ENCODE measurements at regions of chr10 and their contacts with region 1.

Region 1: GRCh38 chr10:100998991-100999741 is 442 bp upstream of the LZTS2 start:
- DNase-seq: peak; percentile 73 to 86 (median 79)
- H3K4me3 ChIP-seq: peak overlapping the region; percentile 64 to 73
- H3K4me3 Mint-ChIP-seq: peak overlapping the region; percentile 84 to 98 (median 91)
- H3K27ac ChIP-seq: peak overlapping the region; percentile 83
- H3K27ac Mint-ChIP-seq: peak overlapping the region; percentile 82 to 96 (median 94)
- H3K4me1 ChIP-seq: peaks cover 24% of the 10 kb centered on the region
- H3K4me1 Mint-ChIP-seq: peaks cover 15 to 34% (median 24%) of the 10 kb centered on the region in 4 donors
- H3K27me3 ChIP-seq: no peaks in the 10 kb centered on the region
- H3K27me3 Mint-ChIP-seq: no peaks in the 10 kb centered on the region

Region 2: GRCh38 chr10:100562008-100562711 is 437.0 kb before region 1 on chr10:
- CTCF ChIA-PET with region 1: no interaction called
- POLR2A ChIA-PET with region 1: interaction called, 3 read pairs
- intact Hi-C with region 1: loop called (anchors 5 kb)
- DNase-seq: peak; percentile 77 to 79 (median 79)
- H3K4me3 ChIP-seq: no peak overlapping the region
- H3K4me3 Mint-ChIP-seq: peak overlapping the region; percentile 7 to 71 (median 58)
- H3K27ac ChIP-seq: no peak overlapping the region
- H3K27ac Mint-ChIP-seq: no peak overlapping the region
- H3K4me1 ChIP-seq: peaks cover 17% of the 10 kb centered on the region
- H3K4me1 Mint-ChIP-seq: peaks cover 14 to 22% (median 16%) of the 10 kb centered on the region in 4 donors
- H3K27me3 ChIP-seq: no peaks in the 10 kb centered on the region
- H3K27me3 Mint-ChIP-seq: peaks cover 26 to 43% of the 10 kb centered on the region in 2 donors

Region 3: DNA sequence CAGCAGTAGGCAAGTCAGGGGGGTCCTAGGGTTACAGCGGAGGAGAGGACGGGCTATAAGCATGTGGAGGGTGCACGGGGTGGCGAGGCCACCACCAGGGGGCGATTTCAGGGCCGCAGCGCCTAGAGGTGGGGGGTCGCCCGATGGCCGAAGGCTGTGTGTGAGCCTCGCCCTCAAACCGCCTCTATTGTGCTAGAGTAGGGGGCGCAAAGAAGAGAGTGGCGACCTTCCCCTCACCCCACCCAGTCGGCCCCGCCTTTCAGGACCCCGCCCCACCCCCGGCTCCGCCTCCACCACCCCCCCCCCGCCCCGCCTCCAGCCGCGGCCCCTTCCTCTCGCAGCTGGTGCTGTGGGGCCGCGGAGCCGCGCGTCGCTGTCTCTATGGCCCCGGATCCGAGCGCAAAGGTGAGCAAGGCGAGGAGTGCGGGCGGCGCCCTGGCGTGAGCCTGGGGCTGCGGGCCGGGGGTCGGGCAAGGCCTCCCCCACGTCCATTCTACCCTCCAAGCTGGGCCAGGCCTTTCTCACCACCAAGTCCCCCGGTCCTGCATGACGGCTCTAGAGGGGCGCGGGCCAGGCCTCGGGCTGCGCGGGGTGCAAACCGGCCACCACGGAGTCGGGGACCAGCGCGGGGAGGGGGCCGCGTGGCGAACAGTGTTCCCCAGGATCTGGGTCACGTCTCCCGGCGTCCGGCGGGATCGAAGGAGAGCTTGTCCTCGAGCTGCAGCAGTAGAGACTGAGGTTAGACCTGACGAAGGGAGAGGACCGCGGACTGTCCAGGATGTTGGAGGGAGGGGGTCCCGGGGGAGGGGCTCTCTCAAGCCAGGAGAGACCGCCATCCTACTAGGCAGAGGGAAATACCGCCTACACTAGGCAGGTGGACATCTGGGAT is 29.7 kb before region 1 on chr10 and contains the start of gene SEMA4G:
- CTCF ChIA-PET with region 1: interaction called, 15 read pairs
- POLR2A ChIA-PET with region 1: interaction called, 8 read pairs
- intact Hi-C with region 1: loop called (anchors 2 kb)
- DNase-seq: peak; percentile 24 to 49 (median 32)
- H3K4me3 ChIP-seq: peak within 1 kb of the TSS in 1 of 2 donors; percentile 58
- H3K4me3 Mint-ChIP-seq: peak within 1 kb of the TSS; percentile 66 to 81 (median 76)
- H3K27ac ChIP-seq: no peak within 1 kb of the TSS
- H3K27ac Mint-ChIP-seq: peak within 1 kb of the TSS in 4 of 7 donors; percentile 43 to 70 (median 59)
- H3K4me1 ChIP-seq: peaks cover 18% of the 10 kb centered on the region
- H3K4me1 Mint-ChIP-seq: peaks cover 4 to 23% (median 14%) of the 10 kb centered on the region in 4 donors
- H3K27me3 ChIP-seq: no peaks in the 10 kb centered on the region
- H3K27me3 Mint-ChIP-seq: no peaks in the 10 kb centered on the region
- total RNA-seq, gene SEMA4G: 1.1 to 1.4 TPM

Region 4: DNA sequence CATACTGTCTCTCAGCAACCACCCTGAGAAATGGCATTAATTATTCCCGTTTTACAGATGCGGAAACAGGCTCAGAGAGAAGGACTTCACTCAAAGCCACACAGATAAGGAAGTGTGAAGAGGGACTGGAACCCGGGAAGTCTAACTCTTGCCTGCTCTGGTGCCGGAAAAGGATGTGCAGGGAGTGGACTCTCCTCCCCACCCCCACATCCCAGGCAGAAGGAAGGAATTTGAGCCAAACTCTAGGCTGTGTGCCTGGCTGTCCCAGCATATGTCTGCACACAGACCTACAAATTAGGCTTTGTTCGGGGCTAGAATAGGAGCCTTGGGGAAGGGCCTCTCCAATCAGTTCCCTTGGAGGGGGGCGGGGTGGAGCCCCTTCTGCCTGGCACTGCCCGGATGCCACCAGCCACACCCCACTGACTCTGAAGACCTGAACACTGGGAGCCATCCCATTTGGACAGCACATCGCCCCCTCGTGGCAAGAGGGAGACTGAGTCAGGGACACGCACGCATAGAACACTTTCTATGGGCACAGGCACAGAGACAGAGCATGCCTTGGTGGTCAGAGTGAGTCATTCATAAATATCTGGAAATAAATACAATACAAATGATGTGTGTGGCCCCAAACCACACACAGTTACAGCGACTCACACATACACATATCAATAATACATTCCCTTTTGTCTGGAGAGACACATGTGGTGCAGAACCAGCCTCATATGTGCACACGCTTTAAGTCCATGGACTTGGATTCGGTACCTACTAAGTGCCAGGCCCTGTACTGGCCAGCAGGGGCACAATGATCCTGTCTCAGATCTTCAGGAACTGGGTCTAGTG is 13.6 kb after region 1 on chr10:
- CTCF ChIA-PET with region 1: interaction called, 171 read pairs
- POLR2A ChIA-PET with region 1: interaction called, 19 read pairs
- intact Hi-C with region 1: loop called (anchors 1 kb)
- DNase-seq: peak; percentile 51 to 72 (median 65)
- H3K4me3 ChIP-seq: no peak overlapping the region
- H3K4me3 Mint-ChIP-seq: no peak overlapping the region
- H3K27ac ChIP-seq: no peak overlapping the region
- H3K27ac Mint-ChIP-seq: peak overlapping the region in 3 of 7 donors; percentile 2 to 67 (median 61)
- H3K4me1 ChIP-seq: peaks cover 19% of the 10 kb centered on the region
- H3K4me1 Mint-ChIP-seq: peaks cover 10 to 15% (median 13%) of the 10 kb centered on the region in 4 donors
- H3K27me3 ChIP-seq: peaks cover 11% of the 10 kb centered on the region
- H3K27me3 Mint-ChIP-seq: peaks cover 20 to 23% of the 10 kb centered on the region in 2 donors

Region 5: DNA sequence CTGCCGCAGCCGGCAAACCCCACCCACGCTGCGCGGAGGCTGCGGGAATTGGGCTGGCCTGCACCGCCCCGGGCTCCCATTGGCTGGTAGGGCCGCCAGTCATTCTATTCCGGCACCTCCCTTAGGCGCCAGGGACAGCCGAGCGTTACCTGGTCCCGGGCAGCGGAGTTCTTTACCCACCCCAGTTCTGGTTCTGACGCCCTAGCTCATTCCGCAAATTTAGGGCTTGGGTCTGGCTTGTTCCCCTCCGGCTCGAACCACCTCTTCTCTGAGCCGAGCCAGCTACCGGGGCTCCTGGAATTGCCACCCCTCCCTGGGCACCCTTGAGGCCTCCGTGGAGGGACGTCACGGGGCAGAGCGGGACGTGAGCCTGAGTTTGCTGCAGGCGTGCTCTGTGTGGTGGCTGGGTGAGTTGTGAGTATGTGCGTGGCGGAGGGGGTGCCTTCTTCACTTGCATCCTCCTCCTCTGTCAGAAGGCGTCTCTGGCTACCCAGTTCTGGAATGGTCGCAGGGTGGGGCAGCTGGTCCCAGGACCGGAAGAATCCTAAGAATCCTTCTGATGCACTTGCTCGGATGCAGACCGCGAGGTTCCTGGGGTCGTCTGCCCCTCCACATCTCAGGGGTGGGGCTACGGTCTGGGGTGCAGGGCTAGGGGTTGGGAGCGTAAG is 32.1 kb after region 1 on chr10 and contains the starts of genes PDZD7 and SFXN3:
- CTCF ChIA-PET with region 1: interaction called, 26 read pairs
- POLR2A ChIA-PET with region 1: interaction called, 90 read pairs
- intact Hi-C with region 1: loop called (anchors 1 kb)
- DNase-seq: peak; percentile 95 to 96 (median 96)
- H3K4me3 ChIP-seq: peak within 1 kb of the TSS; percentile 95 to 99
- H3K4me3 Mint-ChIP-seq: peak within 1 kb of the TSS; percentile 92 to 100 (median 96)
- H3K27ac ChIP-seq: peak within 1 kb of the TSS; percentile 92
- H3K27ac Mint-ChIP-seq: peak within 1 kb of the TSS; percentile 93 to 100 (median 99)
- H3K4me1 ChIP-seq: peaks cover 20% of the 10 kb centered on the region
- H3K4me1 Mint-ChIP-seq: peaks cover 10 to 34% (median 15%) of the 10 kb centered on the region in 4 donors
- H3K27me3 ChIP-seq: no peaks in the 10 kb centered on the region
- H3K27me3 Mint-ChIP-seq: no peaks in the 10 kb centered on the region
- total RNA-seq, gene PDZD7: 1.1 to 1.8 TPM
- total RNA-seq, gene SFXN3: 118 to 123 TPM

Region 6: GRCh38 chr10:101050208-101051069 is 51.3 kb after region 1 on chr10:
- CTCF ChIA-PET with region 1: interaction called, 10 read pairs
- POLR2A ChIA-PET with region 1: interaction called, 3 read pairs
- intact Hi-C with region 1: no loop called
- DNase-seq: peak; percentile 72 to 81 (median 73)
- H3K4me3 ChIP-seq: no peak overlapping the region
- H3K4me3 Mint-ChIP-seq: peak overlapping the region in 6 of 8 donors; percentile 13 to 65 (median 41)
- H3K27ac ChIP-seq: no peak overlapping the region
- H3K27ac Mint-ChIP-seq: peak overlapping the region in 1 of 7 donors; percentile 75
- H3K4me1 ChIP-seq: peaks cover 10% of the 10 kb centered on the region
- H3K4me1 Mint-ChIP-seq: peaks cover 3 to 25% (median 8%) of the 10 kb centered on the region in 4 donors
- H3K27me3 ChIP-seq: peaks cover 33% of the 10 kb centered on the region
- H3K27me3 Mint-ChIP-seq: peaks cover 35 to 38% of the 10 kb centered on the region in 2 donors

Region 7: DNA sequence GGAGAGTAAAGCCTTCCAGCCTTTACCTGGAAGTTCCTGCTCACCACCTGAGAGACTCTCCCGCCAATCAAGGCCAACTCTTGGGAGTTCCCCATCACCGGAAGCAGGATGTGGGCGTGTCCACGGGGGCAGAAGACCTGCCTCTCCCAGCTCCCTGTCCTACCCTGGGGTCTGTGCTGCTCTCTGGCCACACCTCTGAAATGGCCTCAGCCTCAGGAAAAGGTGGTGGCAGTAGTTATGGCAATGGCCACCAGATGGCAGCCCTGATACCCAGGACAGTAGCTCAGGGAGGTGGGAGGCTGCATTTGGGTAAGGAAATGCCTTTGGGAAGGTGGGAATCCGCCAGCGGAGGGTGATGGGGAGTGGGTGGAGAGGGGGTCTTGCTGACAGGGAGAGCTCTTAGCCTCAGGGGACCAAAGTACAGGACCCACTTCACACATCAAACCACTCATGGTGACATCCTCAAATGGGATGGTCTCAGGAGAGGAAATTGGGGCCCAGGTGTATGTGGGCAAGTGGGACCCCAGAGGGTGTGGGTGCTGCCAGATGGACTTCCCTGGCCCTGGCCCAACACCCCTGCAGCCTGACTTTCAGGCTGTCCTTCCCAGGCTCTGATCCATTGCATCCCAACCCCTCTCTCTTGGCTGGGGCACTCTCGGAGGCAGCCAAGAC is 96.5 kb after region 1 on chr10:
- CTCF ChIA-PET with region 1: no interaction called
- POLR2A ChIA-PET with region 1: no interaction called
- intact Hi-C with region 1: no loop called
- DNase-seq: peak; percentile 60 to 74 (median 64)
- H3K4me3 ChIP-seq: no peak overlapping the region
- H3K4me3 Mint-ChIP-seq: no peak overlapping the region
- H3K27ac ChIP-seq: no peak overlapping the region
- H3K27ac Mint-ChIP-seq: no peak overlapping the region
- H3K4me1 ChIP-seq: no peaks in the 10 kb centered on the region
- H3K4me1 Mint-ChIP-seq: no peaks in the 10 kb centered on the region
- H3K27me3 ChIP-seq: peaks cover 2% of the 10 kb centered on the region
- H3K27me3 Mint-ChIP-seq: peaks cover 34 to 53% of the 10 kb centered on the region in 2 donors

Measured in CD4-positive, alpha-beta memory T cell (primary cell).